ENCODE measurements at regions of chr3 and their contacts with region 1.

Region 1: DNA sequence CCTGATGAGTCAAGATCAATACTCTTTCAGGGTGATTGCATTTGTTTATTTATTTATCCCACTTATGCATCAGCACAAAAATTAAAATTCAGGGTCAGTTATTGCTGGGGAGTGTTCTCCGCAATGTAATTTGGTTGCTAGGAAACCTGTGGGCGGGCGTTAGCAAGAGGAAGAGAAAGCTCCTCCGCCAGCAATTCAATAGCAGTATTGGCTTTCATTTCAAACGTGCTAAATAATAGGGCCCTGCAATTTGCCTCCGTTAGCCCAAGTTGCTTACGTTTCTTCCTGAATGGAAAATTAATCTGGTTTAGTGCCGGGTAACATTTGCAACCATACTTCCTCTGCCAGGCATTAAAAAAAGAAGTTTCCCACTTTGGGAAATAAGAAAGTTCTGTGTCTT is 35.5 kb upstream of the PLCL2 start:
- DNase-seq: peak; percentile 39
- CTCF ChIP-seq: no peak

Region 2: DNA sequence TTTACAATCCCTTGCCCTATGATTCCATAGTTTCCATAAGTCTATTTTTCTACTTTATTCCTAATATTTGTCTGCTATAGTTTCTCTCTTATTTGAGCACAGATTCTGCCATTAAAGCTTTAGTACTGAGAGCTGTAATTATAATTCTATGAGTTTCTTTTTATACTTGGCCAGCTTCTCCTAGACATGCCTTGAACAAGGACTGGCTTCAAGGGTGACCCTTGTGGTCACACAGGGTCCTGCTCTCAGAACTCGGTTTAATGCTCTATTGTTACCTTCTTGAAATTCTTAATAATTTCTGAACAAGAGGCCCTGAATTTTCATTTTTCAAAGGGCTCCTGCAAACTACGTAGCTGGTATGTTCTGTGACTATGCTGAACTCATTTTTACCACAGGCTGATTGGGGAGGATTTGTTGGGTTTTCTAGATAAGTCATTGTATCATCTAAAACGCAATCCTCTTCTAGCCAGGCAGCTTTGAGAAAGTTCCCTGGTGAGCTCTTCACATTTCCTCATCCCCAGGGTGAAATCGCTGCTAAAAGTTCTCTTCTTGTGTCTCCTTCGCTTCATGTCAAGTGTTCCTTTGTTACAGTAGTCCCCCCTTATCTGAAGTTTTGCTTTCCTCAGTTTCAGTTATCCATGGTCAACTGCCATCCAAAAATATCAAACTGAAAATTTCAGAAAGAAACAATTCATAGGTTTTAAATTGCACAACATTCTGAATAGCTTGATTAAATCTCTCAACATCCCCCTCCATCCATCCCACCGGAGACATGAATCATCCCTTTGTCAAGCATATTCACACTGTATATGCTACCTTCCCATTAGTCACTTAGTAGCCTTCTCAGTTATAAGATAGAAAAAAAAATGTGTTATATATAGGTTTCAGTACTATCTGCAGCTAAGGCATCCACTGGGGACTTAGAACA is 22.9 kb after region 1 on chr3:
- CTCF ChIA-PET with region 1: interaction called, 11 read pairs
- POLR2A ChIA-PET with region 1: no interaction called
- DNase-seq: no peak
- CTCF ChIP-seq: no peak